ENCODE measurements at regions of chr1 and their contacts with region 1.

Region 1: GRCh38 chr1:40344597-40344996 is 27.5 kb upstream of the COL9A2 start:
- DNase-seq: peak in 1 of 2 donors; percentile 33
- ATAC-seq: peak in 6 of 8 donors; percentile 51 to 85 (median 64)
- H3K4me3 ChIP-seq: peak overlapping the region in 1 of 10 donors; percentile 45
- H3K27ac ChIP-seq: peak overlapping the region in 1 of 10 donors; percentile 84
- H3K4me1 ChIP-seq: peaks cover 0 to 46% (median 0%) of the 10 kb centered on the region in 9 donors
- H3K27me3 ChIP-seq: peaks cover 0 to 5% (median 0%) of the 10 kb centered on the region in 7 donors
- CTCF ChIP-seq: no peak

Region 2: GRCh38 chr1:40079774-40080400 is 264.7 kb before region 1 on chr1:
- intact Hi-C with region 1: loop called in 3 of 10 experiments (anchors 5 to 10 kb)
- DNase-seq: no peak
- ATAC-seq: peak in 1 of 8 donors; percentile 30
- H3K4me3 ChIP-seq: no peak overlapping the region
- H3K27ac ChIP-seq: peak overlapping the region in 1 of 10 donors; percentile 69
- H3K4me1 ChIP-seq: peaks cover 0 to 79% (median 0%) of the 10 kb centered on the region in 9 donors
- H3K27me3 ChIP-seq: no peaks in the 10 kb centered on the region
- CTCF ChIP-seq: no peak

Region 3: DNA sequence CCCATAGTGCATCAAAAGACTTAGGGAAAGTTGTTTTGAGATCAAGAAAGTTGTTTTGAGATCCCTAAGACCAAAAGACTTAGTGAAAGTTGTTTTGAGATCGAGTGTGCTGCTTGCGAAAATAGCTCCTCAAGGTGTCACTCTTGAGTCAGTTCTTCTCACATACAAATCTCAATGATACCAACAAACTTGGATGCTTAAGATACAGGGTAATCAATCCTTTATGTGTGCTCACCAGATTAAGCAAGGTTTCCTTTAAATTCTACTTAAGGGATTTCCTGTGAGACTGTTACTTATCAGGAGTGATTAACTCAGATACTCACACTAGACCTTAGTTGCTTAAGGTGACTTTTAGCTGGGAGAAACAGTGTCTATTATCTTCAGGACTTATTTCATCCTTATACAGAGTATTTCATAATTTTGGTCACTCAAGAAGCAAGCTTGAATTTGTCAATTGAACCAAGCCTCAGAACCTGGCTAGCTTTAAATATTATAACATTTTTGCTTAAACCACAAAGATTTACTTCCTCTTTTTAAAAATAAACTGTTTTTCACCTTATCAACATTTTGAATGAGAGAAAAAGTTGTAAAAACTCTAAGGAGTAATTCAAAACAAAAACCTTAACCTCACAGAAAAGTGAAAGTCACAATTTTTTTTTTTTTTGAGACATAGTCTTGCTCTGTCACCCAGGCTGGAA is 191.4 kb before region 1 on chr1:
- intact Hi-C with region 1: loop called in 6 of 10 experiments (anchors 2 to 5 kb)
- DNase-seq: peak in 1 of 2 donors; percentile 22
- ATAC-seq: no peak
- H3K4me3 ChIP-seq: no peak overlapping the region
- H3K27ac ChIP-seq: no peak overlapping the region
- H3K4me1 ChIP-seq: peaks cover 0 to 23% (median 0%) of the 10 kb centered on the region in 9 donors
- H3K27me3 ChIP-seq: peaks cover 0 to 15% (median 8%) of the 10 kb centered on the region in 7 donors
- CTCF ChIP-seq: peak; percentile 35 to 86 (median 75)

Region 4: GRCh38 chr1:40197656-40198055 is 146.9 kb before region 1 on chr1:
- intact Hi-C with region 1: no loop called
- DNase-seq: no peak
- ATAC-seq: no peak
- H3K4me3 ChIP-seq: no peak overlapping the region
- H3K27ac ChIP-seq: no peak overlapping the region
- H3K4me1 ChIP-seq: peaks cover 0 to 15% (median 10%) of the 10 kb centered on the region in 9 donors
- H3K27me3 ChIP-seq: no peaks in the 10 kb centered on the region
- CTCF ChIP-seq: peak in 2 of 9 donors; percentile 20

Region 5: DNA sequence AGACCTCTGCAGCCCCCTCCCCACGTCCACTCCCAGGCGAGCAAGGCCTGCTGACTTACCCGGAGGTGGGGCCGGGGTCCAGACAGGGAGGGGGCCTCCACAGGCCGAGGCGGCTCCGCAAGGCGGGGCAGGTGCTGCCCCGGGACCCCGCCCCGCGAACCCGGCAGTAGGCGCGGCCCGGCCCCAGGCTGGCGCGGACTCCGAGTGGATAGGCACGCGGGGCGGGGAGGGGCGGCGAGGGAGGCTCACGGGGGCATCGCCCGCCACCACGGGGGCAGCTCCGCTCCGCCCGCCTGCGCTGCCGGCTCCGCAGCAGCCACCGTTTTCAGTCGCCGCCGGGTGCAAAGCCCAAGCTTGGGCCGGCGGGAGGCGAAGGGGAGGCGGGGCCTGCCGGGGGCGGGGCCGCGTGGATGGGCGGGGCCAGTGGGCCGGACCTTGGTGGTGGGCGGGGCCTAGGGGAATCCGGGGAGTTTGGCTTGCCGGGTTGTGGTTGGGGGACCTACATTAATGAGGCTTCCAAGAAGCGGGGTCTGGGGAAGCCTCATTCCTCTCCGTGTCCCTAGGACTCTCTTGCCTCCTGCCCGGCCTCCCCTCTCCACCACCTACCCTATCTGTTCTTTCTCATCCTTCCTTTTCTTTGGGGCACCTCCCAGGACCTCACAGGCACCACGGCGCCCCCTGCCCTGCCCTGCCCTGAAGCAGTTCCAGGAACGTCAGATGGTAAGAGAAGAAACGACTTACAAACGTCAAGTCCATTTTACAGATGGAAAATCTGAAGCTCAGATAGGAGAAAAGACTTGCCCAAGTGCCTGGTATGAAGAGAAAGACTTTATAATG is 321.0 kb after region 1 on chr1 and contains the start of gene RIMS3:
- intact Hi-C with region 1: no loop called
- DNase-seq: peak; percentile 62 to 85
- ATAC-seq: peak; percentile 89 to 96 (median 92)
- H3K4me3 ChIP-seq: peak within 1 kb of the TSS; percentile 32 to 70 (median 60)
- H3K27ac ChIP-seq: peak within 1 kb of the TSS in 2 of 10 donors; percentile 39 to 68
- H3K4me1 ChIP-seq: peaks cover 0 to 16% (median 13%) of the 10 kb centered on the region in 9 donors
- H3K27me3 ChIP-seq: no peaks in the 10 kb centered on the region
- CTCF ChIP-seq: peak in 1 of 9 donors; percentile 6
- total RNA-seq, gene RIMS3: 0.34 to 2.0 (median 0.79) TPM